Activated naive CD4-positive, alpha-beta T cell treated with anti-CD3 and anti-CD28 coated beads for 36 hours (primary cell): ENCODE measurements at regions of chr5 and their contacts with region 1.

Region 1: GRCh38 chr5:180605554-180606214 is 14.4 kb upstream of the SCGB3A1 start:
- DNase-seq: peak; percentile 87
- H3K4me3 Mint-ChIP-seq: no peak overlapping the region
- H3K27ac Mint-ChIP-seq: no peak overlapping the region
- H3K4me1 Mint-ChIP-seq: no peaks in the 10 kb centered on the region
- H3K27me3 Mint-ChIP-seq: no peaks in the 10 kb centered on the region

Region 2: DNA sequence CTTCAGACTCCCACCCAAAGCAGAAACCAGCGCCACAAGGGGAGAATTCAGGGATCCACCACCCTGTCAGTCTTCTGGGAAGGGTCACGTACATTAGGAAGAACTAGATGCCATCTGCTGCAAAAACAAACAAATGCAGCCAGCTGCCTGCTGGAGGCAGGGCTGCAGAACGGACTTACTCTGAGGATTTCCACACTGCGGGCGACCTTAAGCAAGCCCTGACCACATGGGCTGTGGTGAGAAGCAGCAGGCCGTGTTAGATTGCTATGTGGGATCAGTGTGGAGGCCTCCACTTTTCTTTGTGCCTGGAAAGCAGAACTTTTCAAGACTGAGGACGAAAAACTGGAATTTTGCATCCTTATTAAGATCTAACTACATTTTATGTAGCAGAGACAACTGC is 825.3 kb before region 1 on chr5:
- CTCF ChIA-PET with region 1: no interaction called
- intact Hi-C with region 1: no loop called
- DNase-seq: no peak
- H3K4me3 Mint-ChIP-seq: no peak overlapping the region
- H3K27ac Mint-ChIP-seq: peak overlapping the region; percentile 15
- H3K4me1 Mint-ChIP-seq: no peaks in the 10 kb centered on the region
- H3K27me3 Mint-ChIP-seq: no peaks in the 10 kb centered on the region

Region 3: GRCh38 chr5:180525399-180525798 is 80.3 kb before region 1 on chr5:
- CTCF ChIA-PET with region 1: interaction called, 7 read pairs
- intact Hi-C with region 1: loop called (anchors 1 kb)
- DNase-seq: no peak
- H3K4me3 Mint-ChIP-seq: no peak overlapping the region
- H3K27ac Mint-ChIP-seq: no peak overlapping the region
- H3K4me1 Mint-ChIP-seq: peaks cover 55% of the 10 kb centered on the region
- H3K27me3 Mint-ChIP-seq: no peaks in the 10 kb centered on the region